ENCODE measurements at regions of chr20 and their contacts with region 1.

Region 1: DNA sequence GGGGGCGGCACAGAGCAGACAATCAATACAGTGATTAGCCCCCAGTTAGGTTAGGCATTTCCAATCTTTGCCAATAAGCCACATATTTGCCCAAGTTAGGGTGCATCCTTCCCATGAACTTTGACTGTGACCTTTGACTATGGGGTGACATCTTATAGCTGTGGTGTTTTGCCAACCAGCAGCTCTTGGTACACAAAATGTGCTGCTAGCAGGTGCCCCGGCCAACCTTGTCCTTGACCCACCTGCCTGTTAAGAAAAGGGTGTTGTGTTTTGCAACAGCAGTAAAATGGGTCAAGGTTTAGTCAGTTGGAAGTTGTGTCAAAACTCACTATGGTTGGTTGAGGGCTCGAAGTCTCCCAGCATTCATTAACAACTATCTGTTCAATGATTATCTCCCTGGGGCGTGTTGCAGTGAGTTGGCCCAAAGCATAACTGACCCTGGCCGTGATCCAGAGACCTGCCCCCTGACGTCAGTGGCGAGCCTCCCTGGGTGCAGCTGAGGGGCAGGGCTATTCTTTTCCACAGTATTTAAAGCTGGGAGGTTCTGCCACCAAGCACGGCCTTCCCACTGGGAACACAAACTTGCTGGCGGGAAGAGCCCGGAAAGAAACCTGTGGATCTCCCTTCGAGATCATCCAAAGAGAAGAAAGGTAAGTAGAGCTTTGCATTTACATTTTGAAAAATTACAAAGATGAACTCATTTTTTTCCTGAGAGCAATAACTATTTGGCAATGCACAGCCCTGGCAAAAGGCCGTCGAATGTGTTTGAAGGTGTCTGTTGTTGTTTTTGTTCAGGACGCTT is at the start of gene PCK1:
- H3K4me3 ChIP-seq: no peak within 1 kb of the TSS
- H3K27ac ChIP-seq: no peak within 1 kb of the TSS
- H3K4me1 ChIP-seq: no peaks in the 10 kb centered on the region
- CTCF ChIP-seq: no peak

Region 2: GRCh38 chr20:57450419-57450818 is 110.3 kb before region 1 on chr20:
- CTCF ChIA-PET with region 1: no interaction called
- POLR2A ChIA-PET with region 1: no interaction called
- H3K4me3 ChIP-seq: no peak overlapping the region
- H3K27ac ChIP-seq: no peak overlapping the region
- H3K4me1 ChIP-seq: no peaks in the 10 kb centered on the region
- CTCF ChIP-seq: no peak

Region 3: GRCh38 chr20:57573890-57574289 is 13.1 kb after region 1 on chr20:
- CTCF ChIA-PET with region 1: interaction called, 21 read pairs
- POLR2A ChIA-PET with region 1: no interaction called
- H3K4me3 ChIP-seq: no peak overlapping the region
- H3K27ac ChIP-seq: no peak overlapping the region
- H3K4me1 ChIP-seq: no peaks in the 10 kb centered on the region
- CTCF ChIP-seq: peak; percentile 39

Measured in HEK293 (cell line).